Mammary epithelial cell (primary cell): ENCODE measurements at regions of chr4 and their contacts with region 1.

Region 1: DNA sequence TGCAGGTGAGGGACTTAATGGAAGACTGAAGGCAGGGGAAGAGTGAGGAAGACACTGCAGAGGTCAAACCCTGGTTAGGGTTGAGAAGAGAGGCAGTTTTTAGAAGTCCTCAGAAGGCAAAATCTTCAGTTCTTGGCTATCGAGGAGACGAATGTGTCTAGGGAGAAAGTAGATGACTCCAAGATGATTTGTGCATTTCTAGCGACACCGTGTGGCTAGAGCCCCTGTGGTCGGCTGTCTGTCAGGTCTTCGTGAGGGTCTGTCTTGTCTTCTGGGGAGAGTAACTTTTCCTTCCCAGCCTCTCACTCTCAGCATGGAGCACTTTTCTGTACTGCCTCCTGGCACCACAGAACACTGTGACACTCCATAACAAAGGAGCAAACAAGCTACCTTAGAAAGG is 458.1 kb downstream of the STIM2 start:
- DNase-seq: peak; percentile 24
- H3K4me3 ChIP-seq: no peak overlapping the region
- H3K27ac ChIP-seq: no peak overlapping the region
- H3K4me1 ChIP-seq: no peaks in the 10 kb centered on the region
- H3K27me3 ChIP-seq: no peaks in the 10 kb centered on the region
- CTCF ChIP-seq: peak; percentile 27 to 35

Region 2: DNA sequence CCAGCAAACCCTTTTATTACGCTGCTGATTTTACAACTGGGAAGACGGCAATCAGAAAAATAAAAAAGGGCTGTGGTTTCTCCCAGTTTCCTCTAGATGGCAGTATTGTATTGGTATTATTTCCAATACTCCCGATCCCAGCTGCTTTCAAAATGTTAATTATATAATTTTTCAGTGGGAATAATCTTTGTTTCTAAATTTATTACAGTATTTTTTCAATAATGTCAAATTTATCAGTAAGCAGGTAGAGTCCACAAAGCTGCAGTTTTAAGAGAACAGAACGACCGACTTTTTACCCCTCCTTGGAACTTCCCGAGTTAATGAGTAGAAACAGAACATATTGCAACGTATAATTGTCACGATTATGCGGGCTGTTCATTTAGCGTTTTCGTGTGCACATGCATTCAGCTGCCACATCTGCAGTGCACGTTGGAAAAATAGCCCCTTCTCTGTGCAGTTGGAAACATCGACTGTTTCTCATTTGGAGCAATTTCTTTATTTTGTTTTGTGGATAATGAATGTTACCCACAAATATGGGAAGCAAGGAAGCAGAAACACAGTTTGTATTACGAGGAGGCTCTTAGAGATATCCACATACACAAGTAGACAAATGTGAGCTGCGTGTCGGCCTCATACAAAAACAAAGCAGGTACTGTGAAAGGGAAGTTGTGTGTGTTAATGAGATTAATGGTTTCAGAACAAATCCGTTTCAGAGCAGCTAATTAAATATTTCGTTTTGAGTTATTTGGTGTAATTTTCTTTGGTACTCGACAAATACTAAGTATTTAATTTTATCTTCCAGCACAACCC is 270.1 kb before region 1 on chr4:
- CTCF ChIA-PET with region 1: no interaction called
- dilution Hi-C with region 1: no loop called
- in situ Hi-C with region 1: loop called in 1 of 2 experiments (anchors 10 kb)
- intact Hi-C with region 1: loop called (anchors 2 kb)
- DNase-seq: peak; percentile 6
- H3K4me3 ChIP-seq: peak overlapping the region in 2 of 3 experiments; percentile 13 to 28
- H3K27ac ChIP-seq: no peak overlapping the region
- H3K4me1 ChIP-seq: peaks cover 4% of the 10 kb centered on the region
- H3K27me3 ChIP-seq: no peaks in the 10 kb centered on the region
- CTCF ChIP-seq: peak; percentile 53 to 66

Region 3: DNA sequence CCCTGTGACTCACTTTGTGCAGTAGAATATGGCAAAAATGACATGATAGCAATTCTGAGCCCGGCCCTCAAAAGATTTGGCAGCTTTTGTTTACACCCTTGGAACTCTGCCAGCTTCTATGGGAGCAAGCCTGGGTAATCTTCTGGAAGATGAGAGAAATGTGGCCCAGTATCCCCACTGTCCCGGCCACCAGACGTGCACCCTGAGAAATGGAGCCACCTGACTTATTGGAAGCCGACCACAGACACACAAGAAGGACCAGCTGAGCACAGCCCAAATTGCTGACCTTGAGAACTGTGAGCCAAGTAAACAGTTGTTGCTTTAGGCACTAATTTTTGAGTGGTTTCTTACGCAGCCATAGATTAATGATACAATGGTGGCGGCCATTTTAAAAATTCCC is 261.1 kb before region 1 on chr4:
- CTCF ChIA-PET with region 1: no interaction called
- dilution Hi-C with region 1: no loop called
- in situ Hi-C with region 1: loop called in 1 of 2 experiments (anchors 10 kb)
- intact Hi-C with region 1: no loop called
- DNase-seq: no peak
- H3K4me3 ChIP-seq: no peak overlapping the region
- H3K27ac ChIP-seq: no peak overlapping the region
- H3K4me1 ChIP-seq: no peaks in the 10 kb centered on the region
- H3K27me3 ChIP-seq: no peaks in the 10 kb centered on the region
- CTCF ChIP-seq: no peak

Region 4: GRCh38 chr4:27176400-27176799 is 142.3 kb before region 1 on chr4:
- CTCF ChIA-PET with region 1: no interaction called
- dilution Hi-C with region 1: no loop called
- in situ Hi-C with region 1: no loop called
- intact Hi-C with region 1: loop called (anchors 1 kb)
- DNase-seq: peak; percentile 25
- H3K4me3 ChIP-seq: no peak overlapping the region
- H3K27ac ChIP-seq: no peak overlapping the region
- H3K4me1 ChIP-seq: no peaks in the 10 kb centered on the region
- H3K27me3 ChIP-seq: no peaks in the 10 kb centered on the region
- CTCF ChIP-seq: peak; percentile 14 to 50